Activated CD4-positive, alpha-beta T cell treated with anti-CD3 and anti-CD28 coated beads, Interleukin-2, amount 10 ng/mL, durations not matched to agents 7 days and 5 days (primary cell): ENCODE measurements at regions of chr22 and their contacts with region 1.

Region 1: GRCh38 chr22:30634471-30635233 is 929 bp upstream of the SLC35E4 start:
- DNase-seq: peak; percentile 90
- H3K4me3 Mint-ChIP-seq: peak overlapping the region; percentile 71
- H3K27ac Mint-ChIP-seq: peak overlapping the region; percentile 82
- H3K4me1 Mint-ChIP-seq: peaks cover 26% of the 10 kb centered on the region
- H3K27me3 Mint-ChIP-seq: no peaks in the 10 kb centered on the region

Region 2: GRCh38 chr22:30326255-30326705 is 308.4 kb before region 1 on chr22:
- CTCF ChIA-PET with region 1: no interaction called
- POLR2A ChIA-PET with region 1: no interaction called
- DNase-seq: peak; percentile 37
- H3K4me3 Mint-ChIP-seq: peak overlapping the region; percentile 90
- H3K27ac Mint-ChIP-seq: peak overlapping the region; percentile 60
- H3K4me1 Mint-ChIP-seq: peaks cover 49% of the 10 kb centered on the region
- H3K27me3 Mint-ChIP-seq: no peaks in the 10 kb centered on the region

Region 3: DNA sequence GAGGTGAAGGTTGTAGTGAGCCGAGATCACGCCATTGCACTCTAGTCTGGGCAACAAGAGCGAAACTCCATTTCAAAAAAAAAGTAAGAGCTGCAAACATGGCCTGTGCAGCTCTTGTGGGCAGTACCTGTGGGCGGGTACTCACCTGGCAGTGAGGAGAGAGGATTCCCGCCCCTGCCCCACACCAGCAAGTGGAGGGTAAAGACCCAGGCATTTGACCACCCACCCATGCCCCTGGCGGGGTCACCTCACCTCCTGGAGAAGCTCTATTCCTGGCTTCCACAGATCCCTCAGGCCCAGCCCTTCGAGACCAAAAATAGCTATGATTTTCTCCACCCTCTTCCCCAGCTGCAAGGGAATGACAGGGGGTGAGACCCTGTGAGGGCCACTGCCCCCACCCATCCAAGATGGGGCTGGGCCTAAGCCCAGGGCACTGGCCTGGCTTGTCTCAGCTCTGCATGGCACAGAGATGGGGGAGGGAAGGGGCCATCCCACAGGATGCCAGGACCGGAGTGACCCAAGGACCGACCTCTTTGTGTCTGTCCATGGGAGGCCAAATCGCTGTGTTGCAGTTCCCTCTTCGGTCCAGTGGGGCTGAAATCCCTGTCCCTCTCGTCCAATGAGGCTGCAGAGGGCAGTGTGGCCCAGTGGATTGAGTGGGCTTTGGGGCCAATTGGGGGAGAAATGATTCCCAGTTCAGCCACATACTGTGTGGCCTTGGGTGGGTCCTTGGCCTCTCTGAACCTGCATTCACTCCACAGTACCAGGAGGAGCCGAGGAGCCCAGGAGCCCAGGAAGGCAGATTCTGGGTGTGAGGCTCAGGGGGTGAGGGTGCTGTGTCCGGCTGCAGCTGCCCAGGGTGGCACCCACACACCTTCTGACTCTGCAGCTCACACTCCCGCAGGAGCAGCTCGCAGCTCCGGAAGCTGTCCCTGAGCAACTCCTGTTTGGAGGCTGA is 102.7 kb before region 1 on chr22:
- CTCF ChIA-PET with region 1: no interaction called
- POLR2A ChIA-PET with region 1: no interaction called
- DNase-seq: no peak
- H3K4me3 Mint-ChIP-seq: no peak overlapping the region
- H3K27ac Mint-ChIP-seq: no peak overlapping the region
- H3K4me1 Mint-ChIP-seq: peaks cover 6% of the 10 kb centered on the region
- H3K27me3 Mint-ChIP-seq: peaks cover 3% of the 10 kb centered on the region

Region 4: GRCh38 chr22:30606455-30607299 is 28.0 kb before region 1 on chr22 and contains the start of gene TCN2:
- CTCF ChIA-PET with region 1: interaction called, 10 read pairs
- POLR2A ChIA-PET with region 1: no interaction called
- DNase-seq: peak; percentile 36
- H3K4me3 Mint-ChIP-seq: peak within 1 kb of the TSS; percentile 51
- H3K27ac Mint-ChIP-seq: peak within 1 kb of the TSS; percentile 84
- H3K4me1 Mint-ChIP-seq: peaks cover 45% of the 10 kb centered on the region
- H3K27me3 Mint-ChIP-seq: peaks cover 1% of the 10 kb centered on the region
- total RNA-seq, gene TCN2: 0.32 to 0.54 TPM

Region 5: DNA sequence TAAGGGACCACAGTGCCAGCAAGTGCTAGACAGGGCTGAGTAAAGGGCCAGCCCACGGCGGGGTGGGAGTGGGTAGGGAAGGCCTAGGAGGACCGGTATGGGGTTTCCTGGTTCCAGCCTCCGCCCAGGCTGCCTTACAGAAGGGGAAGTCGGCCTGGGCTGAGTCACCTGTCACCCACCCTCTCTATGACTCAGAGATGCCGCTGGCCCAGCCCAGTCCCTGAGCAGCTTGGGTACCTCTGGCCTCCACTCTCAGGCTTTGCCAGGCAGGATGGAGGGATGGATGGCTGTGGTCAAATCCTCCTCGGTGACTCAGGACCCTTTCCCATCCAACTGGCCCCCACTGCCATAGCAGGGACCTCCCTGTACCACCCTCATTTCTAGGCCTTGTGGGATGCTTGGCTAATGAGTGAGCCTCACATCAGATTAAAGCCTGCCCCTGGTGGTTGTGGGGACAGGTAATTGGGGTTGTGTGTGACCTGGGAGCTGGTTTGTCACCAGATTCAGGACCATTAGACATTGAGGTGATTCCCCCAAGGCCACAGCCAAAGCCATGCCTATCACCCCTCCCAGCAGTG is 14.9 kb after region 1 on chr22:
- CTCF ChIA-PET with region 1: interaction called, 23 read pairs
- POLR2A ChIA-PET with region 1: no interaction called
- DNase-seq: peak; percentile 69
- H3K4me3 Mint-ChIP-seq: no peak overlapping the region
- H3K27ac Mint-ChIP-seq: peak overlapping the region; percentile 83
- H3K4me1 Mint-ChIP-seq: peaks cover 33% of the 10 kb centered on the region
- H3K27me3 Mint-ChIP-seq: no peaks in the 10 kb centered on the region

Region 6: GRCh38 chr22:30742291-30743256 is 107.9 kb after region 1 on chr22:
- CTCF ChIA-PET with region 1: interaction called, 23 read pairs
- POLR2A ChIA-PET with region 1: no interaction called
- DNase-seq: no peak
- H3K4me3 Mint-ChIP-seq: no peak overlapping the region
- H3K27ac Mint-ChIP-seq: peak overlapping the region; percentile 74
- H3K4me1 Mint-ChIP-seq: peaks cover 65% of the 10 kb centered on the region
- H3K27me3 Mint-ChIP-seq: no peaks in the 10 kb centered on the region

Region 7: DNA sequence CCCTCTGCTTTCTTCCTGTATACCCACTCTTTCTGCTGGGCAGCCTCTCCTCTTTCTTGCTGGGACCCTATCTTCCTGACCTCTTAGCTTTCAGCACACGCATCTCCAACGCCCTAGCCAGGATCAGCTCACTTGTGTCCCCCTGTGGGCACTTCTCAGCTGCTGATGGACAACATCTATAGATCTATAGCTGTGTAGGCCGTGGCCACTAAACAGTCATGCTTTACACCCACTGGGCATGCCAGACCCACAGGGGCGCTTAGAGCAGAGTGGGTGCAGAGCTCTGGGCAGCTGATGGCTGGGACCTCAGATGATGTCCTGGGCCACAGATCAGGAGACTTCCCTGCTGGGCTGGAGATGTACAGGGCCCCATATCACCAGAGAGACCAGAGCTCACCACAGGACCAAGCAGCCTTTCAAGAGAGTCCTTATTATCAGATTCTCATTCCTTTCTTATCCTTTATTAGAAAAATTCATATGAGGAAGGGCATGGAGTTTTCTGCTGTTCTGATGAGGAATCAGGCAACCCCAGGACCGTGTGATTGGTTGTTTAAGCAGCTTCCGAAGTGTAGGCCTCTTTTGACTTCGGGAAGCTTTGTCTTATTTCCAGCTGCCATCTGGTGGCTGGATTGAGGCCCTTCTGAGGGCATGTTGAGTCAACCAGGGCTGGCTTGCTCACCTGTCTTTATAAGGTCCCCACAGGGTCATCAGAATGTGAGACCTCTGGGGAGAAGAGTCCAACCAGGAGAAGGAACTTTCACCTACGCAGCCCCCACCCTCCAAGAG is 120.5 kb after region 1 on chr22:
- CTCF ChIA-PET with region 1: interaction called, 61 read pairs
- POLR2A ChIA-PET with region 1: interaction called, 9 read pairs
- DNase-seq: peak; percentile 69
- H3K4me3 Mint-ChIP-seq: no peak overlapping the region
- H3K27ac Mint-ChIP-seq: peak overlapping the region; percentile 16
- H3K4me1 Mint-ChIP-seq: peaks cover 10% of the 10 kb centered on the region
- H3K27me3 Mint-ChIP-seq: no peaks in the 10 kb centered on the region